Posterior cingulate gyrus (tissue), 11 donors: ENCODE measurements at regions of chr2 and their contacts with region 1.

Region 1: GRCh38 chr2:135004005-135004746 is 43.1 kb downstream of the MAP3K19 start:
- DNase-seq: peak; percentile 53 to 97 (median 83)

Region 2: DNA sequence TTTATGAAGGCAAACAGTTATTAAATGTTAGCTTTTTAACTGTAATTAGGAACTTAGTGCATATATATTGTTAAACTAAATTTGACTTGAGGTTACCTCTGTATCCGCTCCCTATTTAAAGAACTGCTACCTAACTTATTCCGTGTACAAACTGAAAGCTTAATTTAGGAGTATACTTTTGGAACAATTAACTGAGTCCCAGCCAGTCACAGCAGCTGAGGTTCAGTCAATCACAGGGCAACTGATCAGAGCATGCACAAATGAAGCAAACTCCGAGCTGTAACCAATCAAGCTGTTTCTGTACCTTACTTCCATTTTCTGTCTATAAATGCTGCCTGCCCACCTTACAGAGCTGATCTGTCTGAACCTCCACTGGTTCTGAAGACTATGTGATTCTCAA is 109.1 kb after region 1 on chr2:
- intact Hi-C with region 1: no loop called
- DNase-seq: no peak

Region 3: DNA sequence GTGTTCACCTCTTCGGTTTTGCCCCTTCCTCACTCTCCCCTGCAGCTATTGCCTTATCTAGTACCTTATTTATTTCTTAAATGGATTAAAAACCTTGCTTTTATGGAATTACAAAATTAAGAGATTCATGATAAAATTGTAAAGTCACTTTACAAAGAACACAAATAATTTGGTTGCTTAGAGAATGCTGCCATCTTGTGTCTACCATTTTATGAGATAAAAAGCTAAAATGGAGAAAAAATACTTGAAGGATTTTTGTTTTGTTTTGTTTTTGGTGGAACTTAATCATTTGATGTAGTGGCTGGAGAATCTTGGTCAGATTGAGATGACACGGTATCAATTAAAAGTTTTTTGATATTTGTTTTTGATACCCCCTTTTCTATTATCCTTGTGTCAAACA is 596.7 kb after region 1 on chr2:
- intact Hi-C with region 1: loop called (anchors 1 kb)
- DNase-seq: no peak

Region 4: DNA sequence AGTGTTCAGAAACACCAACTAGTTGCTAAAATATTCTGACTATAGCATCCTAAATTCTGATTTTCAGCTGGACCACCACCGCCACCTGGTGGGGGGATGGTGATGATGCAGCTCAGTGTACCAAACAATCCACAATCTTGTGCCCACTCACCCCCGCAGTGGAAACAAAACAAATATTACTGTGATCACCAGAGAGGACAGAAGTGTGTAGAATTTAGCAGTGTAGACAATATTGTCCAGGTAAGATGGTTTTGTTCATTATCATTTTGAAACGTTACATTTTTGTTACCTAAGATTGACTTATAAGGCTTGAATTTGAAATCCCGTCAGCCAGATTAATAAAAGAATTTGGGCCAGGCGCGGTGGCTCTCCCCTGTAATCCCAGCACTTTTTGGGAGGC is 705.8 kb after region 1 on chr2:
- intact Hi-C with region 1: loop called (anchors 1 kb)
- DNase-seq: peak; percentile 34 to 94 (median 74)